BJ (cell line): ENCODE measurements at regions of chr2 and their contacts with region 1.

Region 1: DNA sequence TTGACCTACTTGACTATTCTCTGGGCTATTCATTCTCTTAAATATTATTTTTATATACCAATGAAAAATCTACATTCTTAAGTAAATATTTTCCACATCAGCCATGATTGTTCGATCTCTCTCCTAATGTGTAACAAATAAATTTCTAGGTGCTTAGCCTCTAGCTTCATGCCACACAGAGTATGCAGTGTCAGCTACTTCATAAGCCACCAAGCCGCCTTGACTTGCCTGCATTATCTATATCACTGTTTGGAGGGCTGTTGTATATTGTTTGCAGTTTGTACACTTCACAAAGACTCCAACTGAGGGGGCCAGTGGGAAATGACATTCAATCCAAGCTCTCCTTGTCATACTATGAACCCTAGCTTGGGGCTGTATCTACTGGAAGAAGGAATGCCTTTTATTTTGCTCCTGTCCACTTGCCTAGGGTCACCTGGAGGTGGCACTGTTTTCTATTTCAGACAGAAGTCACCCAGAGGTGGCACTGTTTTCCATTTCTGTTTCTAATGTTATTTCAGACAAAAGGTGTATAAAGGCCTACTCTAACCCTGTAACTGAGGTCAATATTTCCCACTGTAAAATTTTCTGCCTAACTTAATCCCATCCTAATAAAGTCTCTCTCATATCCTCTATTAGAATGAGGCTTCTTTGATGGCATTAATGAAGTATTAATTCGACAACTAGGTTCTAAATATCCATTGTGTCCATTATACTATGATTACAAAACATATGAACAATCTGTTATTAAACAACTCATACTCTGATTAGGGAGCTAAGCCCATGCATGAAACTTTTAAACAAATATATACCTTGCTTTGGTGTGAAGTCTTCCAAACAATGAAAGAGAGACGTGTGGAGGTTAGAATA is 36.4 kb downstream of the COL5A2 start:
- DNase-seq: no peak
- H3K4me3 ChIP-seq: no peak overlapping the region
- H3K27me3 ChIP-seq: no peaks in the 10 kb centered on the region
- CTCF ChIP-seq: peak; percentile 55

Region 2: DNA sequence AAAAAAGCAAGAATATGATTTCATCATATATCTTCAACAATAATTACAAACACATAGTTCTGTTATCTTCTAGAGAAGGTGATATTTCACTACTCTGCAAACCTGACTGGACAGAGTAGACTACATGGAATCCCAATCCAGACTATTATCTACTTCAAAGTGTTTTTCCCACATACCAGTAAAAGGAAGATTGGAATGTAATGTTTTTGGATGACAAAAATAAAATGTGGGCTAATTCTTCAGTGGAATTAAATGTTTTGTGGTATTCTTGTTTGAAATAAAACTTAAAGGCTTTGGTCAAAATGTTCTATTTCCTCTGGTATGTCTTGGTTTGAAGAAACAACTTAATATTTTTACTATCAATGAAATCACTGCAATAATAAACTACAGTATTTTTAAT is 14.3 kb after region 1 on chr2:
- CTCF ChIA-PET with region 1: interaction called, 10 read pairs
- POLR2A ChIA-PET with region 1: no interaction called
- DNase-seq: no peak
- H3K4me3 ChIP-seq: no peak overlapping the region
- H3K27me3 ChIP-seq: no peaks in the 10 kb centered on the region
- CTCF ChIP-seq: no peak

Region 3: GRCh38 chr2:189249171-189249570 is 106.0 kb after region 1 on chr2:
- CTCF ChIA-PET with region 1: no interaction called
- POLR2A ChIA-PET with region 1: no interaction called
- DNase-seq: no peak
- H3K4me3 ChIP-seq: no peak overlapping the region
- H3K27me3 ChIP-seq: no peaks in the 10 kb centered on the region
- CTCF ChIP-seq: no peak

Region 4: GRCh38 chr2:189297446-189297845 is 154.3 kb after region 1 on chr2:
- CTCF ChIA-PET with region 1: no interaction called
- POLR2A ChIA-PET with region 1: no interaction called
- DNase-seq: no peak
- H3K4me3 ChIP-seq: no peak overlapping the region
- H3K27me3 ChIP-seq: no peaks in the 10 kb centered on the region
- CTCF ChIP-seq: no peak

Region 5: DNA sequence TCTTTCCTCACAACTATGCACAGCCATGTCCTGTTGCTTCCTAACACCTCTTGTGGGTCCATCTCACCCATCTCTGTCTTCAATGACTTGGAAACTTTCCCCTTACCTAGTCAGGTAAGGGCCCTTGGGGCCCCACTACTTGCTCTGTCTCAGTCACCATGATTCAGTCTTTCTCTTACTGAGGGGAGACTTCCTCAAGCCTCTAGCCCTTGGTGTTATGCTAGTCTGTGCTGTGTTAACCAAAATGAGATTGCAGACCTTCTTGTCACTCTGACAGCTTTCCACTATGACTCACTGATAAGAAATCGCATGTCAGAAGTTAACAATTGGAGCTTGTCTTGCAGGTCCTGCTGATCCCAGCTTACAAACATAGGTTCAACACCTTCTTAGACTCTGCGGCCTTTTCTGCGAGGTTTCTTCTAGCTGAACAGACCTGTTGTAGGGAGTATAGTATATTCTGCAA is 363.4 kb after region 1 on chr2:
- CTCF ChIA-PET with region 1: no interaction called
- POLR2A ChIA-PET with region 1: no interaction called
- DNase-seq: no peak
- H3K4me3 ChIP-seq: no peak overlapping the region
- H3K27me3 ChIP-seq: peaks cover 2% of the 10 kb centered on the region; the same call in 1 of the 2 replicates
- CTCF ChIP-seq: no peak